GM12878 (cell line): ENCODE measurements at regions of chr3 and their contacts with region 1.

Region 1: DNA sequence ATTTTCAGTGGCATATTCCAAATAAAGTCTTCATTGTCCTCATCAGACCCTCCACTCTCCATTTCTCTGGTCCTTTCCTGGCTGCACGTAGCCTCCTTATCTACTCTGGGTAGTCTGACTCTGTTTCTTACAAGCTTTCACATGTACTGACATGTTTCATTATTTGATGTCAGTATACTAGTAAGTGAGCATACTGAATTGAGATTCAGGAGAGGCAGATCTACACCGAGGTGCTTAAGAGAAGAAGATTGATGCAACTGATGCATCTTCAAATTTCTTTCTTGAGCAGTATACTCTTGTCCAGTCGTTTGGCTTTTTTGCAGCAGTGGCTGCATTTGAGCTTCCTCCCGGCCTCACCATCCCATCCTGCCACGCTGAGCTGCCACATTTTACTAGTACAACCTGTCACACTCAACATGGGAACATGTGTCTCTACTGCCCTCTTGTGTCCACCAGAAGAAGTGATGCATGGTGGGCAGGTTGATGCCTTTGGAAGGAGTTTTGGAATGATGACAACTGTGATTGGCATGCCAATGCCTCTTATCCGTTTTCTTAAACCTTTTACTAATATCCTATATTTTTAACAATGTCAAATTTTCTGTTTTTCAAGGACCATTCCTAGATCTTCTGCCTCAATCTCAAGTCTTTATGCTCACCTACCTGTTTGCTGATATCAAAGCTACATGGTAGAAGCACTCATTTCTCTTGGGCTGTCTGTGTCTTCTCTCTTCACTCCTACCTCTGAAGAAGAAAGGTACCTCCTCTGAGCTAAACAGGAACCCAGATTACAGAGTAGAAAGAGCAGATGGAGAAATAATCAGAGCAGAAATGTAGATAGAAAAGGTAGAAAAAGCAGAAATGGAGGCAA is 38.7 kb downstream of the GUCA1C start:
- DNase-seq: peak; percentile 19
- ATAC-seq: peak; percentile 96
- H3K4me3 ChIP-seq: no peak overlapping the region
- H3K27ac ChIP-seq: no peak overlapping the region
- H3K4me1 ChIP-seq: no peaks in the 10 kb centered on the region
- H3K27me3 ChIP-seq: no peaks in the 10 kb centered on the region
- CTCF ChIP-seq: peak; percentile 85 to 91 (median 89)
- EP300 ChIP-seq: no peak
- POLR2A ChIP-seq: no peak
- RAD21 ChIP-seq: peak; percentile 92

Region 2: GRCh38 chr3:108489771-108490170 is 425.2 kb before region 1 on chr3:
- CTCF ChIA-PET with region 1: interaction called, 9 read pairs
- POLR2A ChIA-PET with region 1: no interaction called
- RAD21 ChIA-PET with region 1: interaction called, 3 read pairs
- SMC1A ChIA-PET with region 1: interaction called, 7 read pairs
- in situ Hi-C with region 1: loop called (anchors 5 kb)
- intact Hi-C with region 1: loop called (anchors 1 kb)
- DNase-seq: peak; percentile 31
- ATAC-seq: peak; percentile 90
- H3K4me3 ChIP-seq: no peak overlapping the region
- H3K27ac ChIP-seq: no peak overlapping the region
- H3K4me1 ChIP-seq: no peaks in the 10 kb centered on the region
- H3K27me3 ChIP-seq: no peaks in the 10 kb centered on the region
- CTCF ChIP-seq: peak; percentile 69 to 79 (median 70)
- EP300 ChIP-seq: no peak
- POLR2A ChIP-seq: no peak
- RAD21 ChIP-seq: peak; percentile 97

Region 3: DNA sequence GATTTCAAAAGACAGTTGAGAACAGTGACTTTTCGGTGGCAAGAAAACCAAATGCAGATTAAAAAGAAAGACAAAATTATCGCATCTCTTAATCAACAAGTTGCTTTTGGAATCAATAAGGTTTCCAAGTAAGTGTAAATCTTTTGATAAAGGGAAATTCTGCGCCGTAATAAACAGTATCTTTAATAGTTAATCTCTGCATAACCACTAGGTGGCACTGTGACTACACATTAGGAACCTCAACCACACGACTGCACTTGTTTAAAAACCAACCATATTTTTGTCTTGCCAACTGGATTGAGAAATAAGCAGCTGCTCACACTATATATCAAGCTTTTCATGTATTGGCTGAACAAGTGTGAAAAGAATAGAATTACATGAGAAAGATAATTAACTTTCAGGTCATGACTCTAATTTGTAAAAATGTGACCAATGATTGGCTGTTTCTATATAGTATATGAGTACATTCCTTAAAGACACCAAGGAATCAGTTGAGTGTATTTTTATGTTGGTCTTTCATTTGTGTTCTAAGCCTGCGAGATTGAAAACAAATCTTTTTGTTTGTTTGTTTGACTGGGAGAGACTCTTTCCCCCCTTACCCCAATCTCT is 252.8 kb before region 1 on chr3:
- CTCF ChIA-PET with region 1: interaction called, 73 read pairs
- POLR2A ChIA-PET with region 1: no interaction called
- RAD21 ChIA-PET with region 1: interaction called, 17 read pairs
- SMC1A ChIA-PET with region 1: interaction called, 41 read pairs
- in situ Hi-C with region 1: loop called (anchors 5 kb)
- intact Hi-C with region 1: loop called (anchors 1 kb)
- DNase-seq: peak; percentile 11
- ATAC-seq: peak; percentile 89
- H3K4me3 ChIP-seq: no peak overlapping the region
- H3K27ac ChIP-seq: no peak overlapping the region
- H3K4me1 ChIP-seq: no peaks in the 10 kb centered on the region
- H3K27me3 ChIP-seq: no peaks in the 10 kb centered on the region
- CTCF ChIP-seq: peak; percentile 63 to 77 (median 68)
- EP300 ChIP-seq: no peak
- POLR2A ChIP-seq: no peak
- RAD21 ChIP-seq: peak; percentile 91

Region 4: DNA sequence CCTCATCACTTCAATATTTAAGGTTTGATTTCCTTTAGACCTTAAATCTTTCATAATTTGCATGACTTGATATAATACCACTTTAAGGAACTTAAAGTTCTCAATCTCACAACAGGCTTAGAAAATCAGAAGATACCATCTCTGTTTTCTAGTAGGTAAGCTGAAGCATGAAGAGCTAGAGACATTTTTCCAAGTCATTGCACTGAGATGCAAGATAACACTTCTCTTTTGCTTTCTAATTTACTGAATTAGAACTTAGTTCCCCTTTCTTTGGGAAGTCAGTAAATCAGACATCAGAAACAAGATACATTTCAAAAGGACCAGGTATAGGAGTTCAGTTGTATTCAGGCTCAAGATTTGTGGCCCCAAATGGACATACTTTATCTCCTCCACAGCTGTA is 245.8 kb before region 1 on chr3:
- CTCF ChIA-PET with region 1: interaction called, 73 read pairs
- POLR2A ChIA-PET with region 1: no interaction called
- RAD21 ChIA-PET with region 1: interaction called, 17 read pairs
- SMC1A ChIA-PET with region 1: interaction called, 41 read pairs
- in situ Hi-C with region 1: loop called (anchors 5 kb)
- intact Hi-C with region 1: no loop called
- DNase-seq: peak; percentile 9
- ATAC-seq: peak; percentile 56
- H3K4me3 ChIP-seq: no peak overlapping the region; the same call in 1 of the 2 replicates
- H3K27ac ChIP-seq: no peak overlapping the region
- H3K4me1 ChIP-seq: no peaks in the 10 kb centered on the region
- H3K27me3 ChIP-seq: no peaks in the 10 kb centered on the region
- CTCF ChIP-seq: no peak
- EP300 ChIP-seq: no peak
- POLR2A ChIP-seq: no peak
- RAD21 ChIP-seq: no peak

Region 5: DNA sequence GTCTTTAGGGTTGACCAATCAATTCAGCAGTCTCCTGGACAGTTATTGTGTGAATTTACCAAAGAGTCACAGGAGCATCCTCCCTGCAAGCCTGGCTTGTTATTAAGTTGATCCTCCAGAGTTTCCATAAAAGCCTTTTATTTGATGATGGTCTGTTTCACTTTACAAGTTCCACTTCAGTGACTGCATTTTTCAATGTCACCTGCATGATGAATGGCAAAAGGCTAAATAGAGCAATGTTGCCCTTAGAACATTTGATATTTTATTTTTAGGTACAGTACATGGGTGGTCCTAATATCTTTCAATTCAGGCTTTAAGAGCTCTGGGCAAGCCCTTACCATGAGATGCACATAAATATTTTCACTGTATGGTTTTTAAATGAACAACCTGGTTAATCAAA is 16.0 kb after region 1 on chr3:
- CTCF ChIA-PET with region 1: interaction called, 19 read pairs
- POLR2A ChIA-PET with region 1: no interaction called
- RAD21 ChIA-PET with region 1: no interaction called
- SMC1A ChIA-PET with region 1: interaction called, 6 read pairs
- in situ Hi-C with region 1: no loop called
- intact Hi-C with region 1: no loop called
- DNase-seq: no peak
- ATAC-seq: no peak
- H3K4me3 ChIP-seq: no peak overlapping the region
- H3K27ac ChIP-seq: no peak overlapping the region
- H3K4me1 ChIP-seq: no peaks in the 10 kb centered on the region
- H3K27me3 ChIP-seq: no peaks in the 10 kb centered on the region
- CTCF ChIP-seq: no peak
- EP300 ChIP-seq: no peak
- POLR2A ChIP-seq: no peak
- RAD21 ChIP-seq: no peak

Region 6: GRCh38 chr3:108959017-108959416 is 44.0 kb after region 1 on chr3:
- CTCF ChIA-PET with region 1: no interaction called
- POLR2A ChIA-PET with region 1: no interaction called
- RAD21 ChIA-PET with region 1: no interaction called
- SMC1A ChIA-PET with region 1: no interaction called
- in situ Hi-C with region 1: no loop called
- intact Hi-C with region 1: no loop called
- DNase-seq: no peak
- ATAC-seq: no peak
- H3K4me3 ChIP-seq: no peak overlapping the region
- H3K27ac ChIP-seq: no peak overlapping the region
- H3K4me1 ChIP-seq: no peaks in the 10 kb centered on the region
- H3K27me3 ChIP-seq: no peaks in the 10 kb centered on the region
- CTCF ChIP-seq: no peak
- EP300 ChIP-seq: no peak
- POLR2A ChIP-seq: no peak
- RAD21 ChIP-seq: no peak